Left ventricle myocardium inferior (tissue), 1 donor: ENCODE measurements at regions of chr14 and their contacts with region 1.

Region 1: DNA sequence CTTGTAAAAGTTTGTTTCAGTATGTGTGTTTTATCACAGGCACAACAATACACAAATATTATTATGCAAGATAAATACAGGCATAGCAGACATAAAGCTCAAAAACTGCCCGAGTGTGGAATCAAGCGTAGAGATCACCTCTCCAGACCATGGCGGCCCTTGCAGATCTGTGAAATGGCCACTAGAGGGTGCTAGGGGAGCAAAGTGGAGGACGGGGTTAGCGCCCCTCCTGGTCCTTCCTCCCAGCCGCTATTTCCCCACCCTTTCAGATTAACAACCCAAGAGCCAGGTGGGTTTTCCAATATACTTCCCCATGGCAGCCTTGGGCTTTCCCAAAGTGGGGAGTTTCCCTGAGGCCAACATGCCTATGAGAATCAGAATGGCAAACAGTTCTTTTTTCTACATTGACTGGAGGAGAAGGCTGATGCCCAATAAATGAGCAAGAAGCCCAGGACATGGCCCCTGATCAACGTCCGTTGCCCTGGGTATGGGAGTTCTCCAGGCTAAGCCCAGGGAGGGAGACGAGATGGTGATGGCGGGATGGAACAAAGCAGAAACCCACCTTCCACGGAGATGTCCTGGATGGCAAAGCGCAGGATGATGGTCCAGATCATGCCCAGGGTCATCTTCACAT is 67.4 kb downstream of the ACTN1 start:
- DNase-seq: peak; percentile 64
- H3K4me3 ChIP-seq: no peak overlapping the region
- H3K27ac ChIP-seq: no peak overlapping the region
- H3K4me1 ChIP-seq: peaks cover 9% of the 10 kb centered on the region
- H3K27me3 ChIP-seq: no peaks in the 10 kb centered on the region
- CTCF ChIP-seq: peak; percentile 99

Region 2: GRCh38 chr14:69005432-69006147 is 93.9 kb after region 1 on chr14:
- intact Hi-C with region 1: loop called (anchors 10 kb)
- DNase-seq: peak; percentile 22
- H3K4me3 ChIP-seq: no peak overlapping the region
- H3K27ac ChIP-seq: no peak overlapping the region
- H3K4me1 ChIP-seq: peaks cover 9% of the 10 kb centered on the region
- H3K27me3 ChIP-seq: no peaks in the 10 kb centered on the region
- CTCF ChIP-seq: no peak

Region 3: DNA sequence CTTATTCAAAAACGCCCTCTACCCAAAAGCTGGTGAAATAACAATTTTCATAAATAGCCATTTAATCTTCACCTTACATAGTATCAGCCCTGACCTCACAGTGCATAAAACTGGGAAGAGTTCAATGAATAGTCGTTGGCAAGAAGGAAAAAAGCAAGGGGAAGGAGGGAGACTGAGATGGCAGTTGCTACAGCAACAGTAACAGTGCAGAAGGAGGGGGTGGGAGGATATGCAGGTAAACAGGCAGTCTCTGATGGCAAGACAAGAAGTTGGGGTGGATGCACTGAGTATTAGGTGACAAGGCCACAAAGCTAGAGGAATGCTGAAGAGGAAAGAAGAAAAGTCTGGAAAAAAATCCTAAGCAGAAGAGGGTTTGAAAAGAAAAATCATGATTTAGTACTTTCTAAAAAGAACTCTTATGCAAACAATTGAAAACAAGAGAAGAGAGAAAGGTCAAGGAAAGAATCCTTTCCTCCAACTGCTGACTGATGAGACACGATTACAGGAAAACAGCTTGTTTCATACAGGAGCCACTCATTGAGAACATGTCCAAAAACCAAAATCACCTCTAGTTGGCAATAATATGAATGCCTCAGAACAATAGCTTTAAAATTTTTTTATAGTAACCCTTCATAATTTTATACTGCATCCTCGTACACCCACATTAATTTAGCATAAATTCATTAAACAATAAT is 185.2 kb after region 1 on chr14:
- intact Hi-C with region 1: loop called (anchors 5 kb)
- DNase-seq: no peak
- H3K4me3 ChIP-seq: no peak overlapping the region
- H3K27ac ChIP-seq: no peak overlapping the region
- H3K4me1 ChIP-seq: peaks cover 26% of the 10 kb centered on the region
- H3K27me3 ChIP-seq: no peaks in the 10 kb centered on the region
- CTCF ChIP-seq: no peak